ENCODE measurements at regions of chr1 and their contacts with region 1.

Region 1: DNA sequence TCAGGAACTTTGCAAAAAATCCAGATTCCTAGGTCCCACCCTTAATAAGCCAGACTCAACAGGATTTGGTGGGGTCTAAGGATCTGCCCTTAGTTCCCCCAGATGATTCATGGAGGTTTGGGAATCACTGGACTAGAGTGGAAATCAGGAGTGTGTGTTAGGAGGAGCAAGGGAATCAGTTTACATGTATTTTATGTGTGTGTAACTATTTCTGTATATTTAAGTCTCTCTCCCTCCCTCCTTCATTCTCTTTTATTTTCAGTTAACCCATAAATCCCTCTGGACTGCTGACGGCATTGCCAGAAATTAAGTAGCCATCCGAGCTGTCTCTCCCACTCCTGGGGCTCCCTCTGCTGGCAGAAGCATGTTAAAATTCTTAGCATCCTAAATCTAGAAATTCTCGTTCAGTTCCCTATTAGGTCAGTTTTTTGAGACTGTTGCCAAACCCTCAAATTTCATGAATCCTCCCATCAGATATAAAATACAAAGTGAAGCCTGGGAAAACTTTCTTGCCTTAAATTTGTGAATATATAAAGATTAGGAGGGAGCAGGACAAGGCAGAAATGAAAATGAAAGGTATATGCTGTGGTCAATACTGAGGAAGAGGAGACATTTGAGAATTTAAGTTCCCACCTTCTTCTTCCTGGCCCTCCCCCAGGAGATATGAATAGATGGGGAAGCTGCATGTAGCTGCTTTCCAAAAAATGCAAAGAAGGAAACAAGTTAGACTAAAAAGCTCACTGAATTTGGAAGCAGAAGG is 11.7 kb upstream of the HSD11B1 start:
- DNase-seq: peak; percentile 72 to 85 (median 76)
- ATAC-seq: peak; percentile 79
- H3K4me3 ChIP-seq: no peak overlapping the region
- H3K27ac ChIP-seq: no peak overlapping the region
- H3K4me1 ChIP-seq: no peaks in the 10 kb centered on the region; a peak in 2 of 5 replicates
- H3K27me3 ChIP-seq: peaks cover 0 to 3% of the 10 kb centered on the region in 2 experiments; a peak in 1 of 5 replicates
- CTCF ChIP-seq: peak; percentile 86 to 99 (median 90)
- EP300 ChIP-seq: peak; percentile 34; the same call in 1 of the 2 replicates
- POLR2A ChIP-seq: no peak
- RAD21 ChIP-seq: peak; percentile 99 to 100

Region 2: GRCh38 chr1:209565759-209566678 is 126.9 kb before region 1 on chr1:
- CTCF ChIA-PET with region 1: interaction called, 39 read pairs
- POLR2A ChIA-PET with region 1: interaction called, 5 read pairs
- in situ Hi-C with region 1: no loop called
- intact Hi-C with region 1: loop called (anchors 1 kb)
- DNase-seq: peak; percentile 72 to 86 (median 74)
- ATAC-seq: peak; percentile 97
- H3K4me3 ChIP-seq: no peak overlapping the region
- H3K27ac ChIP-seq: no peak overlapping the region
- H3K4me1 ChIP-seq: no peaks in the 10 kb centered on the region
- H3K27me3 ChIP-seq: peaks cover 4 to 18% of the 10 kb centered on the region in 2 experiments; a peak in 3 of 5 replicates
- CTCF ChIP-seq: peak; percentile 75 to 88 (median 87)
- EP300 ChIP-seq: no peak
- POLR2A ChIP-seq: no peak
- RAD21 ChIP-seq: peak; percentile 58 to 76

Region 3: GRCh38 chr1:209601809-209602657 is 90.9 kb before region 1 on chr1:
- CTCF ChIA-PET with region 1: interaction called, 19 read pairs
- POLR2A ChIA-PET with region 1: no interaction called
- in situ Hi-C with region 1: no loop called
- intact Hi-C with region 1: loop called (anchors 1 kb)
- DNase-seq: peak in 2 of 4 experiments; percentile 22 to 41
- ATAC-seq: peak; percentile 92
- H3K4me3 ChIP-seq: no peak overlapping the region
- H3K27ac ChIP-seq: no peak overlapping the region
- H3K4me1 ChIP-seq: no peaks in the 10 kb centered on the region
- H3K27me3 ChIP-seq: peaks cover 0 to 7% of the 10 kb centered on the region in 2 experiments; a peak in 2 of 5 replicates
- CTCF ChIP-seq: peak; percentile 56 to 82 (median 72); a peak in 5 of 6 replicates
- EP300 ChIP-seq: no peak
- POLR2A ChIP-seq: no peak
- RAD21 ChIP-seq: peak; percentile 81 to 84

Region 4: GRCh38 chr1:209635850-209636249 is 57.1 kb before region 1 on chr1:
- CTCF ChIA-PET with region 1: no interaction called
- POLR2A ChIA-PET with region 1: interaction called, 3 read pairs
- in situ Hi-C with region 1: loop called (anchors 5 kb)
- intact Hi-C with region 1: no loop called
- DNase-seq: no peak
- ATAC-seq: no peak
- H3K4me3 ChIP-seq: no peak overlapping the region
- H3K27ac ChIP-seq: no peak overlapping the region
- H3K4me1 ChIP-seq: peaks cover 0 to 5% of the 10 kb centered on the region in 2 experiments; a peak in 2 of 5 replicates
- H3K27me3 ChIP-seq: peaks cover 0 to 10% of the 10 kb centered on the region in 2 experiments; a peak in 3 of 5 replicates
- CTCF ChIP-seq: no peak
- EP300 ChIP-seq: no peak
- POLR2A ChIP-seq: no peak
- RAD21 ChIP-seq: no peak

Region 5: DNA sequence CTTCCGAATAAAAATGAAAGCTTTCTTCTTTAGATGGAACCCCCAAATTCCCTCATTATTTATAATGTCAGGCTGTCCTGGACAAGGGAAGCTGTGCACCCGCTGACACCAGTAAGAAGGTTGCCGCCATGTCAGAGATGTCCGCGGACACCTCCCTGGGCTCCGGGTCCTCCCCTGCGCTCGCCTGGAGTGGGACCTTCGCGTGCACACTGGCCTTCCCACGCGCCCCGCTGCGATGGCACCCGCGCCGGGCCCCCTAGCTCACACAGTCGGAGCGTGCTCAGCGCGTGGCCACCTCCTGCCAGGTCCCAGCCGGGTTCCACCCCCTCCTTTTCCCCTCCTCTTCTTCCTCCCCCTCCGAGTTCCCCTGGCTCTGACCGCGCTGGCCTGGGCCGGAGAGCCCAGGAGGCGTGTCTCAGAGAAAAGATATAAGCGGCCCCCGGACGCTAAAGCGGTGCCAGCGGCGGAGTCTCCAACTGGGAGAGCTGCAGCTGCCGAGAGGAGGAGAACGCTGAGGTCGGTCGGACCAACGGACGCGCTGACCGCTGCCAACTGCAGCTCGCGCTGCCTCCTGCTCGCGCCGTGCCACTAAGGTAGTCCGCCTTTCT is 17.9 kb before region 1 on chr1 and contains the start of gene G0S2:
- CTCF ChIA-PET with region 1: no interaction called
- POLR2A ChIA-PET with region 1: interaction called, 10 read pairs
- in situ Hi-C with region 1: no loop called
- intact Hi-C with region 1: no loop called
- DNase-seq: peak in 3 of 4 experiments; percentile 29 to 64 (median 32)
- ATAC-seq: peak; percentile 86
- H3K4me3 ChIP-seq: peak within 1 kb of the TSS; percentile 45
- H3K27ac ChIP-seq: peak within 1 kb of the TSS; percentile 48; the same call in 2 of the 3 replicates
- H3K4me1 ChIP-seq: peaks cover 12 to 23% of the 10 kb centered on the region in 2 experiments
- H3K27me3 ChIP-seq: peaks cover 0 to 15% of the 10 kb centered on the region in 2 experiments; a peak in 2 of 5 replicates
- CTCF ChIP-seq: no peak
- EP300 ChIP-seq: peak; percentile 72
- POLR2A ChIP-seq: no peak
- RAD21 ChIP-seq: no peak
- polyA plus RNA-seq, gene G0S2: 4.9 to 8.9 TPM

Region 6: DNA sequence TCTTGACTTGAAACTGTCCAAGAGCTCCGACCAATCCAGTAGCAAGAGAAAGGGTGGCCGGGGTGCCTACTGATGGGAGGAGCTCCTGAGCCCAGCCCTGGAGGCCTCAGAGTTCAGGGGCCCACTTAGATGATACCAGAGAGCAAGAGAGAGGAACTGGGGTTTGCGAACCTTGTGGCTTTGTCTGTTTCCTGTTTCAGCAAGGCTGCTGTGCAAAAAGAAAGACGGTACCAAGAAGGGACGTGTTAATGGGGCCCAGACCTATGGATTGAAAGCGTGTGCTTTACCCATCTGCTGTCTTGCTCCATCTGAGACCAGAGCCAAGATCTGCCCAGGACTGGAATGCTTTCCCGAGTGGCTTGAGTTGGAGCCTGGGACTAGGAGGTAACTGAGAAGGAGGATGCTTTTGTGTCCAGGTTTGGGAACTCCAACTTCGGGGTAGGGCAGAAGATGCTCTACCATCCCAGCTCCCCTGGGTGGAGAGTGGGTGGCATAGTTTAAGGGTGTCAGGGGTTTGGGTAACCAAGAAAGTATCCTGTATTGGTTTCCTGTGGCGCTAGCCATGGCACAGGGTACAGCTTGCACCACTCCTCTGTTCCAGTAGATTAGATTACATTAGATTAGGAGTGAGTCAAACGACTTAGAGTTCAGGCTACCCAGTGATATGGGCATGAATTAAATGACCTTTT is 63.1 kb after region 1 on chr1 and contains the start of gene TRAF3IP3:
- CTCF ChIA-PET with region 1: no interaction called
- POLR2A ChIA-PET with region 1: no interaction called
- in situ Hi-C with region 1: no loop called
- intact Hi-C with region 1: no loop called
- DNase-seq: no peak
- ATAC-seq: no peak
- H3K4me3 ChIP-seq: no peak within 1 kb of the TSS
- H3K27ac ChIP-seq: no peak within 1 kb of the TSS
- H3K4me1 ChIP-seq: no peaks in the 10 kb centered on the region; a peak in 1 of 5 replicates
- H3K27me3 ChIP-seq: peaks cover 25 to 52% of the 10 kb centered on the region in 2 experiments
- CTCF ChIP-seq: no peak
- EP300 ChIP-seq: no peak
- POLR2A ChIP-seq: no peak
- RAD21 ChIP-seq: no peak
- polyA plus RNA-seq, gene TRAF3IP3: 0.21 to 0.45 TPM

Region 7: DNA sequence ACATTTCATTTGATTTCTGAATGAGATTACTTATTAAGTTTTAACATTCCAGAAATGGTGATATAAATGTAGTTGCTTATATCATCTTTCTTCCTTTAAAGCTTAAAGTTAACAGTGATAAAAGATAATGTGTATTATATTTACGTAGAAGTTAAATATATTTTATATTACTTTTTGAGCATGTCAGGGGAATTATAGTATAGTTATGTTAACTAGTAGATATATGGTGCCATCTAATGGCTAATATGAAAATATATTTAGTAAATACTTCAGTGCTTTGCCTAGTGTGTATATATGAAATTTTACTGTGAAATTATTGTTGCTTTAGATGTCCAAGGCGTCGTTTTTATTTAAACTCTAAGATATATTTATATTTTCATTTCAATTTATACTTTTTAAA is 296.6 kb after region 1 on chr1:
- CTCF ChIA-PET with region 1: no interaction called
- POLR2A ChIA-PET with region 1: no interaction called
- in situ Hi-C with region 1: no loop called
- intact Hi-C with region 1: loop called (anchors 10 kb)
- DNase-seq: peak in 3 of 4 experiments; percentile 7 to 14 (median 12)
- ATAC-seq: peak; percentile 73; the same call in 2 of the 3 replicates
- H3K4me3 ChIP-seq: no peak overlapping the region
- H3K27ac ChIP-seq: no peak overlapping the region
- H3K4me1 ChIP-seq: no peaks in the 10 kb centered on the region
- H3K27me3 ChIP-seq: no peaks in the 10 kb centered on the region
- CTCF ChIP-seq: peak in 1 of 3 experiments; percentile 52; a peak in 2 of 6 replicates
- EP300 ChIP-seq: no peak
- POLR2A ChIP-seq: no peak
- RAD21 ChIP-seq: peak; percentile 65 to 82

Region 8: GRCh38 chr1:210233216-210234020 is 540.5 kb after region 1 on chr1:
- CTCF ChIA-PET with region 1: no interaction called
- POLR2A ChIA-PET with region 1: no interaction called
- in situ Hi-C with region 1: no loop called
- intact Hi-C with region 1: no loop called
- DNase-seq: peak; percentile 15 to 33 (median 26)
- ATAC-seq: peak; percentile 80
- H3K4me3 ChIP-seq: no peak overlapping the region
- H3K27ac ChIP-seq: no peak overlapping the region
- H3K4me1 ChIP-seq: peaks cover 0 to 22% of the 10 kb centered on the region in 2 experiments; a peak in 4 of 5 replicates
- H3K27me3 ChIP-seq: peaks cover 18% of the 10 kb centered on the region in 2 experiments
- CTCF ChIP-seq: no peak
- EP300 ChIP-seq: no peak
- POLR2A ChIP-seq: no peak
- RAD21 ChIP-seq: no peak